HepG2 (cell line): ENCODE measurements at regions of chr17 and their contacts with region 1.

Region 1: DNA sequence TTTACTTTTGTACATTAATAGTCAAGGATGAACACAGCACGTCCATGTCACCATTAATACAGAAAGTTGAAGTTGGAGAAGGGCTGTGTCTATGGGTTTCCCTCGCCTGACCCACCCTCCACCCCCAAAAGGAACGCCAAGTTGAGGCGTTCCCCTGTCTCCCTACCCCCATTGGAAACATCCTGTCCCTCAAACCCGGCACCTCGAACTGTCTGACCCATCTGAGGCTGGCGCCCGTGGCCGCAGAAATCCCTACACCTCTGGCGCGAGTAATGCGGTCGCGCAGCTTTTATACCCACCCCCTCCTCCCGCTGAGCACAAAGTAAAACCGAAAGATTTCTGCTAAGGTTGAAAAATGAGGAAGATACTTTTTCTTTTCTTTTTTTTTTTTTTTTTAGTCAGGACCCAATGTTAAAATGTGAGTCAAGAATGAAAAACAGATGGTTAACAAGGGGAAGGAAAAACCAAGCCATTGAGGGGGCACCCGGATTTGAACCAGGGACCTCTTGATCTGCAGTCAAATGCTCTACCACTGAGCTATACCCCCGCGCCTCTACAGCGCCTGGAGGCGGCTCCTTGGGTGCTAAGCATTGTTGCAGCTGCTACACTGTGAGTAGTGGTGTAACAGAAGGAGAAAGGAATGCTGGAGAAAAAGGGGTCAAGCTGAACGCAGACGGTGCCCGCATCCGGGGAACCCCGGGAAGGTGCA is 887 bp upstream of the LASP1 start:
- DNase-seq: peak; percentile 90
- ATAC-seq: peak; percentile 52
- H3K4me3 ChIP-seq: peak overlapping the region; percentile 98 to 99 (median 99)
- H3K27ac ChIP-seq: peak overlapping the region; percentile 88
- H3K4me1 ChIP-seq: peaks cover 41% of the 10 kb centered on the region
- H3K27me3 ChIP-seq: peaks cover 0 to 2% of the 10 kb centered on the region in 2 experiments; a peak in 2 of 5 replicates
- CTCF ChIP-seq: peak; percentile 77
- EP300 ChIP-seq: peak in 1 of 2 experiments; percentile 35; a peak in 1 of 4 replicates
- POLR2A ChIP-seq: peak; percentile 18 to 47; a peak in 2 of 4 replicates
- RAD21 ChIP-seq: no peak

Region 2: GRCh38 chr17:38752119-38752929 is 116.6 kb before region 1 on chr17 and contains the start of gene PSMB3:
- CTCF ChIA-PET with region 1: no interaction called
- POLR2A ChIA-PET with region 1: interaction called, 57 read pairs
- in situ Hi-C with region 1: no loop called
- intact Hi-C with region 1: loop called (anchors 5 kb)
- DNase-seq: peak; percentile 100
- ATAC-seq: peak; percentile 86
- H3K4me3 ChIP-seq: peak within 1 kb of the TSS; percentile 82 to 93 (median 84)
- H3K27ac ChIP-seq: peak within 1 kb of the TSS; percentile 81
- H3K4me1 ChIP-seq: peaks cover 30% of the 10 kb centered on the region
- H3K27me3 ChIP-seq: no peaks in the 10 kb centered on the region; a peak in 1 of 5 replicates
- CTCF ChIP-seq: peak; percentile 2; the same call in 1 of the 2 replicates
- EP300 ChIP-seq: 0 out of 4 replicates have a peak, but pooled peaks of 1 of the 2 experiments have one; percentile 15
- POLR2A ChIP-seq: peak; percentile 77 to 82
- RAD21 ChIP-seq: no peak
- total RNA-seq, gene PSMB3: 517 and 688 TPM in 2 replicates

Region 3: DNA sequence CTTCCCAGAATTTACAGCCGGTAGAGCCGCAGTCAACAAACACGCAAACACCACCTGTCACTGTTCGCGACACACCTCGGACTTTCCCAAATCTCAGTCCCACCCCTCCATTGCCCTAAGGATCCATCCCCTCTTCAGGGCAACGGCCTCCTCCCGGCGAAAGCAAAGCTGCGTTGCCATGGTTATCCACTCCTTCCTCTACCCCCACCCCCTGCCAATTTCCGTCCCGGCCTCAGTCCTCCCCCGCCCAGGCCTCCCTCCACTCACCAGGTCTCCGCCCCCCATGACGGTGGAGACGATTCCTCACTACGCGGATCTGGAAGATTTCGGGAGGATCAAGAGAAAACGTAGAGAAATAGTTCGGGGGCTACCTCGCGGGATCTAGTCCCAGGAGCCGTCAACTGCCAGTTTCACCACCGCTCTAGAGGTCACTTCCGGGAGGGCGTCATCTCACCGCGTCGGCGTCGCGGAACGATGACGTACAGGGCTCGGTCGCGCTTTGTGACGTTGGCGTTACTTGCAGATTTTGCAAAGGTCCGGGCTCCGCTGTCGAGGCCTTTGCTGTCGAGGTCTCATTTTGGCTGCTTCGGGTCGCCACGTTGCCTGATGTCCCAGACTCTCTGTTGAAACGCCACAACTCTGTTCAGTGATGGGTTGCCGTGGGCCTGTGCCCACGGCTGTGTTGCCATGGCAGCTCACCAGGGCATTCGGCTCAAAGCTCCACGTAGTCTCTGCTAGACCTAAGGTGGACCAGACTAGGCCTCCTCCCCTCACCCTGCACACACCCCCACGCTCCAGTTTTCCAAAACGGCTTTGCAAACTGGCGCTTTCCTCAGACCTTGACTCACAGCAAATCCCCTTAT is 43.8 kb before region 1 on chr17 and contains the start of gene CWC25:
- CTCF ChIA-PET with region 1: no interaction called
- POLR2A ChIA-PET with region 1: interaction called, 9 read pairs
- in situ Hi-C with region 1: no loop called
- intact Hi-C with region 1: loop called (anchors 1 kb)
- DNase-seq: peak; percentile 93
- ATAC-seq: peak; percentile 84
- H3K4me3 ChIP-seq: peak within 1 kb of the TSS; percentile 91 to 100 (median 93)
- H3K27ac ChIP-seq: peak within 1 kb of the TSS; percentile 98
- H3K4me1 ChIP-seq: peaks cover 21% of the 10 kb centered on the region
- H3K27me3 ChIP-seq: peaks cover 0 to 4% of the 10 kb centered on the region in 2 experiments; a peak in 1 of 5 replicates
- CTCF ChIP-seq: no peak; the same call in 1 of the 2 replicates
- EP300 ChIP-seq: peak; percentile 68 to 96; a peak in 3 of 4 replicates
- POLR2A ChIP-seq: peak; percentile 97 to 98
- RAD21 ChIP-seq: peak; percentile 70
- total RNA-seq, gene CWC25: 12.7 and 15.6 TPM in 2 replicates

Region 4: GRCh38 chr17:38853292-38854219 is 15.4 kb before region 1 on chr17 and contains the start of gene RPL23:
- CTCF ChIA-PET with region 1: no interaction called
- POLR2A ChIA-PET with region 1: interaction called, 175 read pairs
- in situ Hi-C with region 1: no loop called
- intact Hi-C with region 1: no loop called
- DNase-seq: peak; percentile 97
- ATAC-seq: peak; percentile 91
- H3K4me3 ChIP-seq: peak within 1 kb of the TSS; percentile 78 to 88 (median 82)
- H3K27ac ChIP-seq: peak within 1 kb of the TSS; percentile 84
- H3K4me1 ChIP-seq: peaks cover 44% of the 10 kb centered on the region
- H3K27me3 ChIP-seq: no peaks in the 10 kb centered on the region; a peak in 1 of 5 replicates
- CTCF ChIP-seq: no peak
- EP300 ChIP-seq: peak; percentile 64 to 88; a peak in 3 of 4 replicates
- POLR2A ChIP-seq: peak; percentile 99
- RAD21 ChIP-seq: peak; percentile 56; the same call in 1 of the 2 replicates
- total RNA-seq, gene RPL23: 2,790 and 3,298 TPM in 2 replicates

Region 5: DNA sequence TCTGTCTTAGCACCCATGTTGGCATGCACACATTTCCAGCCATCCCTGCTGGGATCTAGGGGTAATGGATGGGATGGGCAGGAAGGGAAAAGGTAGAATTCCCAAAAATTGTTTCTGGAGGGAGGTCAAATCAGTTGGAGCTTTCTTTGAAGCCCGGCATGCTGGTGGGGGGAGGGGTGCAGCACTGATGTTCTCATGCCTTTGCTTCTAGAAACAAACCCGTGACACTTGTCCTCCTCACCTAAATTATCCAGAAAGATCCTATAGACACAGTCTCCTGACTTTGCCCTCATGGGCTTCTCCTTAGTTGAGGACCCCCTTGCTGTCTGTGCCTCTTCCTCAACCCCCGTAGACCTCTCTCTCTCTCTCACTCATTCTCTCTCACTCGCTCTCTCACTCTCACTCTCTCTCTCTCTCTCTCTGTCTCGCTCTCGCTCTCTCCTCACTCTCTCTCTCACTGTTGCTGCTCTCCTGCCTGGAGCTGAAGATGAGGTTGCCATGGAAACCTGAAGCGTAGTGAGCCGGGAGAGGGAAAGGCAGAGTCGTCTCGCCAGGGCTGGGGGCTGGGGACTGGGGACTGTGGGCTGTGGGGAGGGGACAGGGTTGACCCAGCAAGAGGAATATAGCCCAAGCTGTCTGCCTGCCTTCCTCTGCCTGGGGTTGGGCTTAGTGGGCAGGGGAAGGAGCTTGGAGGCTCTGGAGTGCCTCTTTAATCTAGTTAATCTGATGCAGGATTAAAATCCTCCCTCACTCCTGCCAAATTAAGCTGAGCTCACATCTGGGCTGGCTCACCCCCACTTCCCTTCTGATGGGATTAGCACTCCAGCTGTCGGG is 17.0 kb after region 1 on chr17:
- CTCF ChIA-PET with region 1: no interaction called
- POLR2A ChIA-PET with region 1: interaction called, 24 read pairs
- in situ Hi-C with region 1: no loop called
- intact Hi-C with region 1: no loop called
- DNase-seq: no peak
- ATAC-seq: no peak
- H3K4me3 ChIP-seq: no peak overlapping the region
- H3K27ac ChIP-seq: no peak overlapping the region
- H3K4me1 ChIP-seq: peaks cover 37% of the 10 kb centered on the region
- H3K27me3 ChIP-seq: no peaks in the 10 kb centered on the region
- CTCF ChIP-seq: no peak
- EP300 ChIP-seq: no peak
- POLR2A ChIP-seq: 0 out of 4 replicates have a peak, but pooled peaks of 1 of the 2 experiments have one; percentile 9
- RAD21 ChIP-seq: no peak

Region 6: GRCh38 chr17:38912221-38912813 is 43.3 kb after region 1 on chr17:
- CTCF ChIA-PET with region 1: interaction called, 3 read pairs
- POLR2A ChIA-PET with region 1: interaction called, 112 read pairs
- in situ Hi-C with region 1: no loop called
- intact Hi-C with region 1: loop called (anchors 5 kb)
- DNase-seq: no peak
- ATAC-seq: no peak
- H3K4me3 ChIP-seq: no peak overlapping the region
- H3K27ac ChIP-seq: no peak overlapping the region
- H3K4me1 ChIP-seq: peaks cover 40% of the 10 kb centered on the region
- H3K27me3 ChIP-seq: no peaks in the 10 kb centered on the region
- CTCF ChIP-seq: no peak
- EP300 ChIP-seq: no peak
- POLR2A ChIP-seq: no peak
- RAD21 ChIP-seq: no peak

Region 7: DNA sequence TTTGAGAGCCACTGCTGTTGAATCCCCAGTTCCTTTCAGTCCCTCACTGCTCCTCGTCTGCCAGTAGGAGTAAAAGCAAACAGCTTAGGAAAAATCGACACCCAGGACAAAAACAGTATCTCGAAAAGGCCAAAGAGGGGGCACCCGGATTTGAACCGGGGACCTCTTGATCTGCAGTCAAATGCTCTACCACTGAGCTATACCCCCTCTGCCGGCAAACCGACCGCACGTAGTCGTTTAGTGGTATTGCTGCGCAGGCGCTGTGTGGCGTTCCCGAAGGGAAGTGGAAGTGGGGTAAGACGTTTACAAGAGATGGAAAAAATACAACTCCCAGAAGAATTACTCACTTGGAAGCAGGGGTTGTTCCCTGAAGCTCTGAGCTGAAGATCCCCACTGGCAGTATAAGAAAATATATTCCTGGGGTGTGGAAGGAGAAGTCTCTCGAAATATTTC is 284.7 kb after region 1 on chr17:
- CTCF ChIA-PET with region 1: interaction called, 4 read pairs
- POLR2A ChIA-PET with region 1: interaction called, 19 read pairs
- in situ Hi-C with region 1: loop called (anchors 5 kb)
- intact Hi-C with region 1: loop called (anchors 5 kb)
- DNase-seq: peak; percentile 90
- ATAC-seq: peak; percentile 68
- H3K4me3 ChIP-seq: peak overlapping the region; percentile 69 to 95 (median 78)
- H3K27ac ChIP-seq: peak overlapping the region; percentile 43
- H3K4me1 ChIP-seq: peaks cover 41% of the 10 kb centered on the region
- H3K27me3 ChIP-seq: peaks cover 8 to 39% of the 10 kb centered on the region in 2 experiments
- CTCF ChIP-seq: no peak; the same call in 1 of the 2 replicates
- EP300 ChIP-seq: no peak; a peak in 1 of 4 replicates
- POLR2A ChIP-seq: no peak
- RAD21 ChIP-seq: peak; percentile 43